Naive thymus-derived CD4-positive, alpha-beta T cell (primary cell): ENCODE measurements at regions of chr14 and their contacts with region 1.

Region 1: DNA sequence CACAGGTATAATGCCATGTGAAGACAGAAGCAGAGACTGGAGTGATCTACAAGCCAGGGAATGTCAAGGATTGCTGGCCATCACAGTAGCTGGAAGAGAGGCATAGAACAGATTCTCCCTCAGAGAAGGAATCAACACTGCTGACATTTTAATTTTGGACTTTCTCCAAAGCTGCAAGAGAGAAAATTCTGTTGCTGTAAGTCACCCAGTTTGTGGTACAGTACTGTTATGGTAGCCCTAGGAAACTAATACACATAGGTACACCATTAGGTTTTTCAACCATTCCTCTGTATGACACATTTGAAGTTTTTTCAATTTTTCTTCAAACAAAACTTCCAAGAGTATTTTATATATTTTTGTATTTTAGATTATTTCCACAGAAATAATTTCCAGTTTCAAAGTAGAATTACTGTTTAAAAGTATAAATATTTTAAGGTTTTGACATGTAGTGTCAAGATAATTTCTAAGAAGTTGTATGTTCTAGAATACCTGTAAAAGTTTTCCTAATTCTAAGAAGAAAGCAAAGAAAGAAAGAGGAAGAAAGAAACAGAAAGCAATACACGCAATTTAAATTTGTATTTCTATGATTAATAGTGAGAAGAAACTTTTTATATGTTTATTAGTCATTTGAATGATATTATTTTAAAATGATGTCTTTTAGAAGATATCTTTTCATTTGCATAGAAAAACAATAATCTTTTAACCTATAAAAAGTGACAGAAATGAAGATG is 64.9 kb upstream of the CATSPERB start:
- DNase-seq: no peak
- ATAC-seq: no peak
- H3K4me3 ChIP-seq: no peak overlapping the region
- H3K4me3 Mint-ChIP-seq: no peak overlapping the region
- H3K27ac ChIP-seq: no peak overlapping the region
- H3K27ac Mint-ChIP-seq: peak overlapping the region in 6 of 9 donors; percentile 46 to 83 (median 69)
- H3K4me1 ChIP-seq: peaks cover 0 to 12% of the 10 kb centered on the region in 2 donors
- H3K4me1 Mint-ChIP-seq: peaks cover 2 to 39% (median 15%) of the 10 kb centered on the region in 7 donors
- H3K27me3 ChIP-seq: no peaks in the 10 kb centered on the region
- H3K27me3 Mint-ChIP-seq: no peaks in the 10 kb centered on the region

Region 2: DNA sequence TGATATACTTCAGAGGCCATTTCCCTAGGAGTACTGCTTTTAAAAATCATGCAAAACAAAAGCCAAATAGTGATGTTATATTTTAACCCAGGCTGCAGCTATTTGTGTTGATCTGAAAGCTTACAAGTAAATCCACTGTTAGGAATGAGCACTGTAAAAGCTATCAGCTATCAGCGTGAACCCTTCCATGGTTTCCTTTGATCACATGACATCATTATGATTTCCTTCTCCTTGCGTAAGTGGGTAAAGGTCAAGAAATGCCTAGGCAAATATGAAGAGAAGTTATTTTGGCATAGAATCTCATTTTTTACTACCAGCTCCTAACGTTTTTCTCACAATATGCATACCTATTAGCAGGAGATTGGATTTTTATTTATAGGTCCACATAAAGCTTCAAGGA is 16.3 kb before region 1 on chr14:
- CTCF ChIA-PET with region 1: no interaction called
- POLR2A ChIA-PET with region 1: interaction called, 3 read pairs
- intact Hi-C with region 1: loop called in 1 of 2 experiments (anchors 2 kb)
- DNase-seq: no peak
- ATAC-seq: no peak
- H3K4me3 ChIP-seq: no peak overlapping the region
- H3K4me3 Mint-ChIP-seq: no peak overlapping the region
- H3K27ac ChIP-seq: no peak overlapping the region
- H3K27ac Mint-ChIP-seq: peak overlapping the region in 1 of 9 donors; percentile 27
- H3K4me1 ChIP-seq: no peaks in the 10 kb centered on the region
- H3K4me1 Mint-ChIP-seq: peaks cover 4 to 22% (median 10%) of the 10 kb centered on the region in 7 donors
- H3K27me3 ChIP-seq: no peaks in the 10 kb centered on the region
- H3K27me3 Mint-ChIP-seq: no peaks in the 10 kb centered on the region

Region 3: GRCh38 chr14:91830777-91831176 is 34.0 kb after region 1 on chr14:
- CTCF ChIA-PET with region 1: no interaction called
- POLR2A ChIA-PET with region 1: interaction called, 5 read pairs
- intact Hi-C with region 1: loop called in 1 of 2 experiments (anchors 5 kb)
- DNase-seq: no peak
- ATAC-seq: no peak
- H3K4me3 ChIP-seq: no peak overlapping the region
- H3K4me3 Mint-ChIP-seq: peak overlapping the region in 7 of 10 donors; percentile 20 to 60 (median 42)
- H3K27ac ChIP-seq: no peak overlapping the region
- H3K27ac Mint-ChIP-seq: peak overlapping the region in 7 of 9 donors; percentile 0 to 75 (median 49)
- H3K4me1 ChIP-seq: peaks cover 22 to 33% of the 10 kb centered on the region in 2 donors
- H3K4me1 Mint-ChIP-seq: peaks cover 45 to 96% (median 81%) of the 10 kb centered on the region in 7 donors
- H3K27me3 ChIP-seq: no peaks in the 10 kb centered on the region
- H3K27me3 Mint-ChIP-seq: peaks cover 0 to 3% (median 0%) of the 10 kb centered on the region in 5 donors

Region 4: DNA sequence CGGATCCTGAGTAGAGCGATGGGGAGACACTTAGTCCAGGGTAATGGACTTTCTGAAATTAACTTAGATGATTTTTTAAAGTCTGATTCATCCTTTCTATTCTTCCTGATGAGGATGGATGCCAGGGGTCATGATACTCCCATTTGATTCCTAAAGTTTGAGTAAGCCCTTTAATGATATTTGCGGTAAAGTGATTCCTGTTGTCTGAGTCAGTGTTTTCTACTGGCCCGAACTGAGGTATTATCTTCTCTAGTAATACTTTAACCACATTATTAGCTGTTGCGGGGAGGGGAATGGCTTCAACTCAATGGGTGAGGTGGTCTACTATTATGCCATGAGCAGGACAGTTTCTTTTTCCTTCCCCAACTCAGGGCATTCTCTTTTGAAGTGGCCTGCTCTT is 828.4 kb after region 1 on chr14:
- CTCF ChIA-PET with region 1: no interaction called
- POLR2A ChIA-PET with region 1: no interaction called
- intact Hi-C with region 1: no loop called
- DNase-seq: no peak
- ATAC-seq: no peak
- H3K4me3 ChIP-seq: no peak overlapping the region
- H3K4me3 Mint-ChIP-seq: no peak overlapping the region
- H3K27ac ChIP-seq: no peak overlapping the region
- H3K27ac Mint-ChIP-seq: no peak overlapping the region
- H3K4me1 ChIP-seq: no peaks in the 10 kb centered on the region
- H3K4me1 Mint-ChIP-seq: peaks cover 0 to 4% (median 0%) of the 10 kb centered on the region in 7 donors
- H3K27me3 ChIP-seq: no peaks in the 10 kb centered on the region
- H3K27me3 Mint-ChIP-seq: no peaks in the 10 kb centered on the region